B cell (primary cell): ENCODE measurements at regions of chr16 and their contacts with region 1.

Region 1: GRCh38 chr16:352547-353403 is at the start of gene AXIN1:
- DNase-seq: peak; percentile 97
- ATAC-seq: peak; percentile 88
- H3K4me3 ChIP-seq: peak within 1 kb of the TSS; percentile 41 to 73 (median 55)
- H3K4me3 Mint-ChIP-seq: peak within 1 kb of the TSS; percentile 86
- H3K27ac ChIP-seq: peak within 1 kb of the TSS; percentile 38 to 56
- H3K27ac Mint-ChIP-seq: peak within 1 kb of the TSS; percentile 75
- H3K4me1 ChIP-seq: peaks cover 16 to 32% of the 10 kb centered on the region in 2 donors
- H3K4me1 Mint-ChIP-seq: peaks cover 31% of the 10 kb centered on the region
- H3K27me3 ChIP-seq: no peaks in the 10 kb centered on the region
- H3K27me3 Mint-ChIP-seq: no peaks in the 10 kb centered on the region
- CTCF ChIP-seq: peak; percentile 23
- total RNA-seq, gene AXIN1: 37.6 and 40.8 TPM in 2 replicates

Region 2: GRCh38 chr16:228818-229730 is 123.7 kb before region 1 on chr16 and contains the start of gene LUC7L:
- CTCF ChIA-PET with region 1: interaction called, 3 read pairs
- POLR2A ChIA-PET with region 1: interaction called, 20 read pairs
- intact Hi-C with region 1: loop called (anchors 1 kb)
- DNase-seq: peak; percentile 94
- ATAC-seq: peak; percentile 91
- H3K4me3 ChIP-seq: peak within 1 kb of the TSS; percentile 74 to 81 (median 79)
- H3K4me3 Mint-ChIP-seq: peak within 1 kb of the TSS; percentile 94
- H3K27ac ChIP-seq: peak within 1 kb of the TSS; percentile 87 to 95
- H3K27ac Mint-ChIP-seq: peak within 1 kb of the TSS; percentile 94
- H3K4me1 ChIP-seq: peaks cover 12 to 33% of the 10 kb centered on the region in 2 donors
- H3K4me1 Mint-ChIP-seq: peaks cover 28% of the 10 kb centered on the region
- H3K27me3 ChIP-seq: no peaks in the 10 kb centered on the region
- H3K27me3 Mint-ChIP-seq: no peaks in the 10 kb centered on the region
- CTCF ChIP-seq: no peak
- total RNA-seq, gene LUC7L: 181 and 191 TPM in 2 replicates

Region 3: DNA sequence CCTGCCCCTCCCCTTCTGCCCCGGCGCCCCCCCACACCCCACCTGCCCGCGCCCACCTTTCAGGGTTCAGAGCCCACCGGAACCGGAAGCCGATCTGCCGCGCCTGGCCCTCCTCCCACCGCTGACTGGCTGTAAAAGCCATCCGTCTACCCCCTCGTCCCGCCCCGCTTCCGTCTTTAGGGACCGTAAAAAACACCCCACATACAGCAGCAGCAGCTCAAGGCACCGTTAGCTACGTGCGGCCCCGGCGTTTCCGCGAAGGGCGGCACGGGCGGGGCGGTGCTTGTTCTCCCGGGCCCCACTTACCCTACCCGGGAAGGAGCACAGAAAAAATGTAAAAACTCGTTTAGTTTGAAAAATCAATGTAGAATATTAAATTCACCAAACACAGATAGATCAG is 17.7 kb after region 1 on chr16 and contains the start of gene MRPL28:
- CTCF ChIA-PET with region 1: no interaction called
- POLR2A ChIA-PET with region 1: interaction called, 7 read pairs
- intact Hi-C with region 1: loop called (anchors 1 kb)
- DNase-seq: peak; percentile 95
- ATAC-seq: peak; percentile 99
- H3K4me3 ChIP-seq: peak within 1 kb of the TSS in 3 of 5 experiments; percentile 31 to 47 (median 35)
- H3K4me3 Mint-ChIP-seq: peak within 1 kb of the TSS; percentile 85
- H3K27ac ChIP-seq: peak within 1 kb of the TSS; percentile 59 to 66
- H3K27ac Mint-ChIP-seq: peak within 1 kb of the TSS; percentile 72
- H3K4me1 ChIP-seq: peaks cover 6 to 18% of the 10 kb centered on the region in 2 donors
- H3K4me1 Mint-ChIP-seq: peaks cover 17% of the 10 kb centered on the region
- H3K27me3 ChIP-seq: no peaks in the 10 kb centered on the region
- H3K27me3 Mint-ChIP-seq: no peaks in the 10 kb centered on the region
- CTCF ChIP-seq: no peak
- total RNA-seq, gene MRPL28: 44.3 and 45.1 TPM in 2 replicates

Region 4: GRCh38 chr16:401468-402348 is 48.9 kb after region 1 on chr16 and contains the start of gene DECR2:
- CTCF ChIA-PET with region 1: interaction called, 3 read pairs
- POLR2A ChIA-PET with region 1: interaction called, 8 read pairs
- intact Hi-C with region 1: loop called (anchors 1 kb)
- DNase-seq: peak; percentile 94
- ATAC-seq: peak; percentile 82
- H3K4me3 ChIP-seq: peak within 1 kb of the TSS; percentile 57 to 94 (median 91)
- H3K4me3 Mint-ChIP-seq: peak within 1 kb of the TSS; percentile 99
- H3K27ac ChIP-seq: peak within 1 kb of the TSS; percentile 78 to 90
- H3K27ac Mint-ChIP-seq: peak within 1 kb of the TSS; percentile 100
- H3K4me1 ChIP-seq: peaks cover 13 to 20% of the 10 kb centered on the region in 2 donors
- H3K4me1 Mint-ChIP-seq: peaks cover 14% of the 10 kb centered on the region
- H3K27me3 ChIP-seq: no peaks in the 10 kb centered on the region
- H3K27me3 Mint-ChIP-seq: no peaks in the 10 kb centered on the region
- CTCF ChIP-seq: peak; percentile 76
- total RNA-seq, gene DECR2: 9.0 and 11.0 TPM in 2 replicates

Region 5: DNA sequence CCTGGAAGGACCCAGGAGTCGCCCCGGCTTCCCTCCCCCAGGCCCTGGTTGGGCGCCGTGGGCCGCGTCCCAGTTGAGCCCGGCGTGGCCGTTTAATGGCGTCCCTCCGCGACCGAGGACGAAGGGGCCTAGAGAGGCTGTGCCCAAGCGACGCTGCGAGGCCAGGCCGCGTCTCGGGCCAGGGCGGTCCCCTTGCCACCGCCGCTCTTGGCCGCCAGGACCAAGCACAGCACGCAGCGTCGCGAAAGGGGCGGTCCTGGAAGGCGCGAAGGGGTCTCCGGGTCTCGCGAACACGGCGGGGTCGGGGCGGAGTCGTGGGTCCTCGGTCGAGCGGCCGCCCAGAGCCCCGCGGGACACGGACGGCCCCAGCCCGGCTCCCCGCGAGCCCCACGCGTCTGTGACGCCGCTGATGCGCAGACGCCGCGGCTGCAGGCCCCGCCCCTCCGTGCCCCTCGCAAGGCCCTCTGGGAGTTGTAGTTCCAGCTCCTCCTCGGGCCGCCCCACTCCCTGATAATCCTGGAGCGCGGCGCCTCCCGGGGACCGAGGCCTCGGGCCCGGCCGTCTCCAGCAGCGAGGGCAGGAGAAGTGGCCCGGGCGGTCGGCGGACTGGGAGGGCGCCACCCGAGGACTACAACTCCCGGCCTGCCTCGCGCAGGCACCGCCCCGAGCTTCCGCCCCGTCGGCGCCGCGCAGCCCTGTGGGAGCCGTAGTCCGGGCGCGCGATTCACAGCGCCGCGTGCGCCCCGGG is 174.4 kb after region 1 on chr16 and contains the start of gene CAPN15:
- CTCF ChIA-PET with region 1: no interaction called
- POLR2A ChIA-PET with region 1: no interaction called
- intact Hi-C with region 1: loop called (anchors 2 kb)
- DNase-seq: peak; percentile 96
- ATAC-seq: peak; percentile 81
- H3K4me3 ChIP-seq: peak within 1 kb of the TSS; percentile 21 to 79 (median 77)
- H3K4me3 Mint-ChIP-seq: peak within 1 kb of the TSS; percentile 89
- H3K27ac ChIP-seq: peak within 1 kb of the TSS; percentile 88 to 96
- H3K27ac Mint-ChIP-seq: peak within 1 kb of the TSS; percentile 88
- H3K4me1 ChIP-seq: peaks cover 25 to 47% of the 10 kb centered on the region in 2 donors
- H3K4me1 Mint-ChIP-seq: peaks cover 36% of the 10 kb centered on the region
- H3K27me3 ChIP-seq: no peaks in the 10 kb centered on the region
- H3K27me3 Mint-ChIP-seq: no peaks in the 10 kb centered on the region
- CTCF ChIP-seq: peak; percentile 16
- total RNA-seq, gene CAPN15: 67.2 and 68.0 TPM in 2 replicates

Region 6: DNA sequence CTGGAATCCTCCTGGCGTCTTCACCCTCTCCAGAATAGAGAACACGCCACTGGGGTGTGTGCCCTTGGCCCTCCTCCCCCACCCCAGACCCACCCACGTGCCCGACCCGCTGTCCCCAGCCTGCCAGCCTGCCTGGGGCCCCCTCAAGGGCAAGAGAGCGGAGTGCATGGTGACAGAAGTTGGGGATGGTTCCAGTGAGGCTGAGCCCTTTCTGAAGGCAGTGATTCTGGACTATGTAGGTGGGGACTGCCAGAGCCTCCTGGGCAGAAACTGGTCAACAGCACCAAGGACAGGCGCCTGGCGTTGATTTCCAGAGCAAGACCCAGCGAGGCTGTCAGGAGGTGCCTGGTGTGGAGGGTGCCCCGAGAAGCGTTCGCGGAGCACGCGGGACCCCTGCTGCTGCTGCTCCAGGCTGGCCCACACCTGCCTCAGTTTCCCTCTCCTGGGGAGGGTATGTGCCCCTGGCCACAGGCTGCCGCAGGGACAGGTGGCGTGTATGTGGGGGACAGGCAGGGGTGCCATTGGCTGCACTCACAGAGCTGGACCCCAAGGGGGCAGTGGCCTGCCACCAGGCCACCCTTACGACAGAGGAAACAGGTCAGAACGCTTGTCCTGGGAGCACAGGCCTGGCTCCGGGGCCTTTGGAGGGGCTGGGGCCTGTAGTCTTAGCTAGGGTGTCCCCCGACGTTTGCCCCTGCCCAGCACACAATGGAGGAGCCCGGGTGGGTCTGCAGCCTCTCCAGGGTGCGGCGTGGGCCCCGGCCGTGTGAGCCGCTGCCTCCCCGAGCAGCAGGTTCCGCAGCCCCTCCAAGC is 721.0 kb after region 1 on chr16:
- CTCF ChIA-PET with region 1: no interaction called
- POLR2A ChIA-PET with region 1: no interaction called
- intact Hi-C with region 1: no loop called
- DNase-seq: no peak
- ATAC-seq: no peak
- H3K4me3 ChIP-seq: no peak overlapping the region
- H3K4me3 Mint-ChIP-seq: no peak overlapping the region
- H3K27ac ChIP-seq: no peak overlapping the region
- H3K27ac Mint-ChIP-seq: no peak overlapping the region
- H3K4me1 ChIP-seq: no peaks in the 10 kb centered on the region
- H3K4me1 Mint-ChIP-seq: no peaks in the 10 kb centered on the region
- H3K27me3 ChIP-seq: peaks cover 0 to 35% (median 4%) of the 10 kb centered on the region in 4 experiments
- H3K27me3 Mint-ChIP-seq: peaks cover 14% of the 10 kb centered on the region
- CTCF ChIP-seq: no peak